Dendritic cell treated with granulocyte-macrophage colony-stimulating factor and Interleukin-4, amounts not matched to agents 40 ng/mL and 50 ng/mL, for 4 days (primary cell): ENCODE measurements at regions of chr19 and their contacts with region 1.

Region 1: GRCh38 chr19:4182084-4182810 is at the starts of genes ANKRD24 and SIRT6:
- H3K4me3 Mint-ChIP-seq: peak within 1 kb of the TSS; percentile 99
- H3K27ac Mint-ChIP-seq: peak within 1 kb of the TSS; percentile 99
- H3K4me1 Mint-ChIP-seq: peaks cover 53% of the 10 kb centered on the region
- H3K27me3 Mint-ChIP-seq: peaks cover 6% of the 10 kb centered on the region

Region 2: DNA sequence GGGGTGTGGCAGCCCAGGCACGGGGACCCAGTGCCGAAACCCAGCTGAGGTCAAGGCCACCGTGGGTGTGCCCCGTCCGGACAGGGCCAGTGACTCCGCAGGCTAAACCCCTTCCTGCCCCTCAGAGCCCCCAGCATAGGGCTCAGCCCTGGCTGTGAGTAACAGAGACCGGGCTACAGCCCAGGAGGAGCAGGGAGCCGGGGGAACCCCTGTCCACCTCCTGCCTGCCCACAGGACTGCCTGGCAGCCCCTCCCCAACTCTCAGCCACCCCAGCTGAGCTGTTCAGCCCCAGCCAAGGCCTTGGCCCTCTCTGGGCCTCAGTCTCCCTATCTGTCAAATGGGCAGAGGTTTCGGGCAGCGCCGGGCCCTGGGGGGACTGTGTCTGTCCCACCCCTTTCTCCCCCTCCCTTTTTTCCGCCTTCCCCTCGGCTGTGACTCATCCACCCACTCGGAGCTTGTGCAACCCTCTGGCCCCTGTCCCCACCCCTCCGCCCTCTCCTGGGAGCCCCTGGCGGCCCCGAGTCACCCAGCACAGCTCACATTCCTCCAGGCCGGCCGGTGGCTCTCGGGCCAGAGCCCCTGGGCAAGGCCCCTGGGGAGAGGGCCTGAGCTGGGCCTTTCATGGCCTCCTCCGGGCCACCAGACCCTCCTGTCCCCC is 124.1 kb before region 1 on chr19:
- intact Hi-C with region 1: loop called (anchors 10 kb)
- H3K4me3 Mint-ChIP-seq: peak overlapping the region; percentile 68
- H3K27ac Mint-ChIP-seq: peak overlapping the region; percentile 84
- H3K4me1 Mint-ChIP-seq: peaks cover 82% of the 10 kb centered on the region
- H3K27me3 Mint-ChIP-seq: no peaks in the 10 kb centered on the region

Region 3: GRCh38 chr19:4139614-4140236 is 42.5 kb before region 1 on chr19:
- intact Hi-C with region 1: loop called (anchors 10 kb)
- H3K4me3 Mint-ChIP-seq: no peak overlapping the region
- H3K27ac Mint-ChIP-seq: no peak overlapping the region
- H3K4me1 Mint-ChIP-seq: peaks cover 22% of the 10 kb centered on the region
- H3K27me3 Mint-ChIP-seq: peaks cover 15% of the 10 kb centered on the region